GM10248 (cell line): ENCODE measurements at regions of chr15 and their contacts with region 1.

Region 1: DNA sequence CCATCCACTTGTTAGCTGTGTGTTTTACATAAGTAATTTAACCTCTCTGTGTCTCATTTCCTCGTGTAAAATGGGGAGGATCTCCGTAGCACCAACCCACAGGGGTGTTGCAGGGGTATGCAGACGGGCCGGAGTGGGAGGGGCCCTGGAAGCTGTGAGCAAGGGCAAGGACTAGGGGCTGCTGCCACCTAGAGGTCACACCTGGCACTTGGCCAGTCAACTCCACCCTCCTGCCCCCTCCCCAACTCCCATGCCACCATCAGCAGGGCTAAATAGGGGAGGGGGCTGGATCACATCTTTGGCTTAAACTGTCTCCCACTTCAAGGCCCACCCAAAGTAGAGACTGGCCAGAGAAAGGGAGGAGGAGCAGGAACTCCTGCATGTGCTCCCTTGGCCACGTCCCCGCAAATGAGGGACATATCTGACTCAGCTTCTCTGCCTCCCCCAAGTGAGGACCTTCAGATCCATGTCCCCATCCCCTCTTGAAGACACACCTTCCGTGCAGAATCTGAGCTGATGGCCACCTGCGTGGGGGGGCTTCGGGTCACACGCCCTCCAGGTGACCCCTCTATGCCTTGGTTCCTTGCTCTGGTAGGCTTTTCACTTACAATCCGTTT is 2.6 kb downstream of the CCDC9B start:
- DNase-seq: peak; percentile 91
- CTCF ChIP-seq: peak; percentile 92

Region 2: GRCh38 chr15:40226736-40227135 is 111.4 kb before region 1 on chr15:
- CTCF ChIA-PET with region 1: interaction called, 11 read pairs
- POLR2A ChIA-PET with region 1: no interaction called
- DNase-seq: no peak
- CTCF ChIP-seq: no peak

Region 3: DNA sequence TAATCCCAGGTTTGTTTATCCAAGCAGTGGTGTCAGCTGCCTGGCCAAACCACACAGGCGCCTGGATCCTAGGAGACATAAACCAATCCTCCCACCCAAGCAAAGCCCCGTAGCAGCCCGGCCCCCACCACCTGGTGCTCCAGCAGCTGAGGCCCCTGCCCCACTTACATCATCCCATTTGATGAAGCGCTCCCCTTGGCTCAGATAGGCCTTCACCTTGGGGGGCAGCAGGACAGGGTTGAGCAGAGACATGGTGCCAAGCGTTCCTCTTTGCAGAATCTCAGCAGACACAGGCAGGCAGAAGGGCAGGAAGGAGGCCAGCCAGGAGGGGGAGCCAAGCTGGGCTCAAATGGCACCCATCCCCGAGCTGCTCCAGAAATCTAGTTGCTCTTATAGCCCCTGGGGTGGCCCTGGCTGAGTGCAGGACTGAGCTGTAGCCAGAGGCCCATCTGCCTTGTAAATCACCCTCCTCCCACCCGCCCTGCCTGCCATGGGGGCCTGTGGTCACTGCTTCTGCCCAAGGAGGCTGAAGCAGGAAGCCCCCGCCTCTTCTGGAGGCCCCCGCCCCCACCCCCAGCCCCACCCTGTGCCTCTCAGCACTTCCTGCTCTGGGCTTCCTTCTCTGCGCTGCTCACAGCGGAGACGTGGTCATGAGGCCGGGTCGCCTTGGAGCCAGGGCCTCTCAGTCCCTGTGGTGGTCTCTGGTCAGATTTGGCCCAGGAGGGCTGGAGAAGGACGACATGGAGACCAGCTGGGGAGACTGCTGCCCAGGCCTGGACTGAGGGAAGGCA is 30.5 kb before region 1 on chr15 and contains the start of gene PLCB2:
- CTCF ChIA-PET with region 1: interaction called, 87 read pairs
- POLR2A ChIA-PET with region 1: no interaction called
- DNase-seq: peak; percentile 84
- CTCF ChIP-seq: peak; percentile 45

Region 4: DNA sequence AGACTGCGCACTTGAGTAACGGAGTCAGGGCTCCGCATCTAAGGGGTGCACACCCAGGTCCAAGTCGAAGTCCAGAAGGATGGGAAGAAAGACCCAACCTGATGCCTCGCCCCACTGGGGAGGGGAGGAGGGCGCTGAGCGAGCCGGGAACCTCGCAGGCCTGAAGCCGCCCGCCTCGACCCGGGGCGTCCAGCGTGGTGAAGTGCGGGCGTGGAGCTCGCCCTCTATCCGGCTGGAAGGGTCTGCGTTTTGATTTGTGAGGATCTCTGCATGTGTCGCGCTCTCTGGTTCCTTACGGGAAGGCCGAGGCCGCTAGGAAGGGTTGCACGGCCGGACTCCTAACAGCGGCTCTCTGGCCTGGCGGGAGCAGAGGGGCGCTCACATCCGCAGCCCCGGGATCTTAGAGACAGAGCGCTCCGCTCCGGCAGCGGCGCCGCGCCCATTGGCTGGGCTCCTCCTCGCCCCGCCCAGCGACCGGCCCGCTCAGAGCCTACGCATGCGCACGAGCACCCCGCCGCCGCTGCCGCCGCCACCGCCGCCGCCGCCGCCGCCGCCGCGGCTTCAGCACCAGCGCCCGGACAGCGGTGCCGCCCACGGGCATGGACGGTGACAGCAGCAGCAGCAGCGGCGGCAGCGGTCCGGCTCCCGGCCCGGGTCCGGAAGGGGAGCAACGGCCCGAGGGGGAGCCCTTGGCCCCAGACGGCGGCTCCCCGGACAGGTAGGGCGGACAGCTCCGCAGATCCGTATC is 19.7 kb after region 1 on chr15 and contains the start of gene DISP2:
- CTCF ChIA-PET with region 1: interaction called, 186 read pairs
- POLR2A ChIA-PET with region 1: no interaction called
- DNase-seq: peak; percentile 99
- CTCF ChIP-seq: no peak

Region 5: DNA sequence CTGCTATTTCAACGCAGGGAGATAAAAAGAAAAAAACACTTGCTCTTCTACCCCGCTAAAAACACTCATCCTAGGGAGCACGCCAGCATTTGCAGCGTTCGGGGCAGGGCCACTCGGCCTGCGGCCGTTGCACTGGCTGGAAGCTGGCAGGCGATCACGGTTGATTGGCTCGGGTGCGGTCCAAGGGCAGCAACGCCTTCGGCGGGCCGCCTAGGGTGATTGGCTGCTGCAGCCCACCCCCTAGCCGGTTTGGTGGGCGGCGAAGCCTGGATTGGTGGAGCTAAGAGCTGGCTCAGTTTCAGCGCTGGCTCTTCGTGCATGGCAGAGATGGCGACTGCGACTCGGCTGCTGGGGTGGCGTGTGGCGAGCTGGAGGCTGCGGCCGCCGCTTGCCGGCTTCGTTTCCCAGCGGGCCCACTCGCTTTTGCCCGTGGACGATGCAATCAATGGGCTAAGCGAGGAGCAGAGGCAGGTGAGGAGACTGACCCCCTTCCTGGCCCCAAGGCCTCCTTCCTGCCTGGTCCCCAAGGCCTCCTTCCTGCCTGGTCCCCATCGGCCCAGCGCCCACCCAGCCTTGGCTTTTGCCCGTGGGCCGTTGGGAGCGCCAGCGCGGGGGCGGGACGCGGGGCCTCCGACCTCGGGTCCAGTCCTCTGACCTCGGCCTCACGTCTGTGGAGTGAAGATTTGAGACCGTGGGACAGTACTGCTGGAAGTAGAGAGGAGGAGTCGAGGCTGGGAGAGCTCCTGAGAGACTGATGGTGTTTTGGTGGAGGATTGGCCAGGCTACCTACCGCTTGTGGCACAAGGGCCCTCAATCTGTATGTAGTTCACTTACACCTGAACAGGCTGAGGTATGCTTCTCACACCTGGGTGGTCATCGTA is 67.6 kb after region 1 on chr15 and contains the start of gene IVD:
- CTCF ChIA-PET with region 1: interaction called, 53 read pairs
- POLR2A ChIA-PET with region 1: no interaction called
- DNase-seq: peak; percentile 95
- CTCF ChIP-seq: no peak

Region 6: DNA sequence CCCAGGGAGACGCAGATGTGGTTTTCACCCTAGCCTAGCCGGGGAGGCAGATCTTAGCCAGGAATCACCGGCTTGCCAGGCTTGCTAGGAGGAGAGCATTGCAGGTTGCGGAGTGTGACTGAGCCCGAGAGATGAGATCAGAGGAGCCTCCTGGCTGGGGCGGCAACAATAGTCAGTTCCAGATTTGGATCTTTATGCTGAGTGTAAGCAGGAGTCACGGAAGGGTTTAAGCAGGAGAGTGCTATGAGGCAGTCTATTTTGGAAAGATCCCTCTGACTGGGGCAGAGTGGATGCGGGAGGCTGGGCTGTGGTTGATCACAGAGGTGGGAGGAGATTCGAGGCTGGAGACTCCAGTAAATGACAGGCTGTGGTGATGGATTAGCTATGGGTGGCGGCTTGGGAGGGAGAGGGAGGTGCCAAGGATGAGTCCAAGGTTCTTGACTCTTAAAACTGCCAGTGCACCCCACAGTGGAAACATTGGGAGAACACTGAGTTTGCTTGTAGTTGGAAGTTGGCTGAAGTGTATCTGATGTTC is 92.2 kb after region 1 on chr15:
- CTCF ChIA-PET with region 1: interaction called, 125 read pairs
- POLR2A ChIA-PET with region 1: no interaction called
- DNase-seq: no peak
- CTCF ChIP-seq: no peak